Aorta (tissue), 5 donors: ENCODE measurements at regions of chr16 and their contacts with region 1.

Region 1: DNA sequence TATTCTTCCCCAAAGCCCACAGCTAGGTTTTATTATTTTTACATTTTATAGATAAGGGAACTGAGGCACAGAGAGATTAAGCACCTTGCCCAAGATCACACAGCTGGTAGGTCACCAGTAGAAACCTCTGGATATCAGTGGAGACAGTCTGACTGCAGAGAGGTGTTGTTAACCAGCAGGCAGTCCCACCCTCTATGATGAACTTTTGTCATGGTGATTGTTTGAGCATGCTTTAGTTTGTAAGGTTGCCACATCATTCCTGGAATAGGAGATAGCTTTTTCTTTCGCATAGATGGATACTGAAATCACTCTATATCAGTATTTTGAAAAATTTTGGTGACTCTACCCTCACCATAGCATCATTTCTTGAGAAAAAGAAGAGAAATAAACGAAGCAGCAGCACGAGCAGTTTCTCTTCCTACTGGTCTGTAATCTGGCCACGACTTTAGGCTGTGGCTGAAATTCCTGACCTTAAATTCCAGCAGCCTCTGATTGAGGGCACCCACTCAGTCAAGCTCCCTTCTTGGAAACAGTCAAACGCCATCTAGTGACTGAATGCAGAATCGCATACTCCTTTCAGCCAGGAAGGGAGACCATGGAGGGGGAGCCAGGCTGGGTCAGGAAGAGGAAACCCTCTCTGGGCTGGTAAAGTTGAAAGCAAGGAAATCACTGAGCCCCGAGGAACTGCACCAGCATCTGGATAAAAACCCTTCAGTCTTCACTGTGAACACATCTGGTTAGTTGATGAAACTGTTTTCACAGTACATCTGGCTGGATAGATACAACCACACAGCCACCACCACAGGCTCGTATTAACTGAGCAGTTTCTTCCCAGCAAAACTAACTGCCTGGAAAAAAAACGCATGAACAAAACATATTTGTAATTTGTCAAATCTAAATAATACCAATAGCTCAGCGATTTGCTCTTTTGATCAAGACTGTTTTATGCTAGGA is 108.4 kb upstream of the XYLT1 start:
- DNase-seq: peak in 1 of 2 donors; percentile 58
- ATAC-seq: peak; percentile 78
- H3K4me3 ChIP-seq: no peak overlapping the region
- H3K27ac ChIP-seq: no peak overlapping the region
- H3K4me1 ChIP-seq: no peaks in the 10 kb centered on the region
- H3K27me3 ChIP-seq: no peaks in the 10 kb centered on the region

Region 2: GRCh38 chr16:16861546-16861945 is 717.7 kb before region 1 on chr16:
- intact Hi-C with region 1: loop called in 1 of 2 experiments (anchors 10 kb)
- DNase-seq: peak in 1 of 2 donors; percentile 47
- ATAC-seq: no peak
- H3K4me3 ChIP-seq: no peak overlapping the region
- H3K27ac ChIP-seq: no peak overlapping the region
- H3K4me1 ChIP-seq: no peaks in the 10 kb centered on the region
- H3K27me3 ChIP-seq: no peaks in the 10 kb centered on the region

Region 3: DNA sequence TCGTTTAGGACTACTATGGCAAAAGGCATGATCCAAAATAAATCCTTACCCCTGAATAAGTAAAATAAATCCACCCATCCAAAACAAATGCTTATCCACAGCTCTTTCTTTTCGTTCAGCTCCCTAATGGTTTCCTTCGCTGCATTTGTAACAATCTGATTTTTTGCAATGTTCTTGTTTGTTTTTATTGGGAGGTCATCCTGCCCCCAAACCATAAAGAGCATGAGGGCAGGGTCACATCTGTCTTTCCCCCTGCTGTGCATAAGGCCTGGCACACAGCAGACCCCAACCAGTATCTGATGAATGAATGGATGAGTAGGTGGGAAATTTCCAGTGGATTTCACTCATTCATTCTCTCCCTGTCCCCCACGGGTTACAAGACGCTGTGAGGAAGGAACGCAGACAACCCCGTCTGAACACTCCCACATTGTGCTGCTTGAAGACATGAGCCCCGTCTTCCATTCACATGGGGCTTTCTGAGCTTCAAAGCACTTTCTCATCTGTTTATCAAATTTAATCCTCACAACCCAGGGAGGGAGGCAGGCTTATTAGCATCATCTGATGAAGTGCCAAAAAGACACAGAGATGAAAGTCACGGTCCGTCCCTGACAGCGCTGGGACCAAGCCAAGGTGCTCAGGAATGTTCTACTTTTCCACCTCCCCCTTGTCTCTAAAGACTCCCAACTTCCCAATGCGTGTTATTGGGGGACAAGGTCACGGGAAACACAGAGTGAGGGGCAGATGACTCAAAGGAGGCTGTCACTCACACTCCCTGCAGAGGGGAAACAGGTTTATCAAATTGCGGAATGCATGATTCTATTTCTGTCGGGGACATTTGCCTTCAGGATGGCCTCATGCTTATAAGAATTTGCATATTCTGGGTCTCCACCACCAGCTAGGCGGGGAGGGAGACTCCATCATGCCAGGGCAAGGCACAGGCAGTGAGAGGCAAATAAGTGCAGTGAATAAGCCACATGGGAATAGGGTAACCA is 119.4 kb before region 1 on chr16:
- intact Hi-C with region 1: no loop called
- DNase-seq: no peak
- ATAC-seq: no peak
- H3K4me3 ChIP-seq: no peak overlapping the region
- H3K27ac ChIP-seq: no peak overlapping the region
- H3K4me1 ChIP-seq: no peaks in the 10 kb centered on the region
- H3K27me3 ChIP-seq: no peaks in the 10 kb centered on the region

Region 4: GRCh38 chr16:17476414-17477270 is 102.6 kb before region 1 on chr16:
- intact Hi-C with region 1: loop called (anchors 5 to 10 kb)
- DNase-seq: no peak
- ATAC-seq: peak; percentile 73
- H3K4me3 ChIP-seq: no peak overlapping the region
- H3K27ac ChIP-seq: no peak overlapping the region
- H3K4me1 ChIP-seq: no peaks in the 10 kb centered on the region
- H3K27me3 ChIP-seq: peaks cover 0 to 3% of the 10 kb centered on the region in 2 donors